Activated CD4-positive, alpha-beta memory T cell treated with anti-CD3 and anti-CD28 coated beads for 36 hours (primary cell): ENCODE measurements at regions of chr10 and their contacts with region 1.

Region 1: GRCh38 chr10:8053446-8054290 is 820 bp upstream of the GATA3 start:
- DNase-seq: peak; percentile 96
- H3K4me3 Mint-ChIP-seq: peak overlapping the region; percentile 99
- H3K27ac Mint-ChIP-seq: peak overlapping the region; percentile 99
- H3K4me1 Mint-ChIP-seq: peaks cover 29% of the 10 kb centered on the region
- H3K27me3 Mint-ChIP-seq: peaks cover 21% of the 10 kb centered on the region

Region 2: GRCh38 chr10:7797582-7797981 is 256.1 kb before region 1 on chr10:
- CTCF ChIA-PET with region 1: no interaction called
- POLR2A ChIA-PET with region 1: no interaction called
- intact Hi-C with region 1: no loop called
- DNase-seq: peak; percentile 18
- H3K4me3 Mint-ChIP-seq: no peak overlapping the region
- H3K27ac Mint-ChIP-seq: peak overlapping the region; percentile 28
- H3K4me1 Mint-ChIP-seq: peaks cover 40% of the 10 kb centered on the region
- H3K27me3 Mint-ChIP-seq: no peaks in the 10 kb centered on the region

Region 3: DNA sequence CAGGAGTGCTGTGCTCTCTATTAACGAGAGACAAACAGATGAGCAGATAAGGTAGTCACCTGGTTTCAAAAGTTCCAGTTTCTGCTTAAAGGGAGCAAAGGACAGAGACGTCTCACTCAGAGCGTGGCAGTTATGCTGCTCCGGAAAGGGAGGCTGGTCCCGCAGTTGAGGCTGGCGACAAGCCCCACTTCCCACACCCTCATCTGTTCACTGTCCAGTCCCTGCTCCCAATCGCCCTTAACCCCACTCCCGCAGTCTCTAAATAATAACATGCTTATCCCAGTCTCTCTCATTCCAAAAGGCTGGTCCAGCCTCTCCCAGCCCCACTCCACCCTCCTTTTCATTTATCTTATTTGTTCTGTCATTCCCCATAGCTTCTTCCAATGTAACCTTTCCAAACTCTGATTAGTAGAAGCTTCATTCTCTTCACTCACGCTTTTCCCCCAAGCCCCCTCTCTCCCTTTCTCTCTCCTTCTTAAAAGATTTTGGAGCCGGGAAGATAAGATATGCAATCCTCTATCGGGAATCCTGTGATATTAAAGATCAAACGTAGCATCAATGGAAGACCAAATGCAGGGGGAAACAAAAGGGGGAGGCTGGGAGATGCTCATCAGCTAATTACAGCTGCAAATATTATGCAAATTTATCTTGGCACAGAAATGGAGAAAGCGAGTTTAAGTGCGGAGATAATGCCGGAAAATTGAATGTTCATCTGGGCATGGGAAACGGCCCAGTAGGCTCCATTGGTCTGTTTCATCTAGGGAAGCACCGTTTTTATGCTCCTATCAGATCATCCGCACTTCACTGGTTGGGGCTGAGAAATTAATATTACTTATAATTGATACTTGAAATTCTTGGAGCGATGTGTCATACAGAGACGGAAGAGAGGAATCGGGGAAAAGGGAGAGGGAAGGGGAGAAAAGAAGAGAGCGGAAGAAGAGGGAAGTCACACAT is 15.4 kb before region 1 on chr10:
- CTCF ChIA-PET with region 1: interaction called, 5 read pairs
- POLR2A ChIA-PET with region 1: no interaction called
- intact Hi-C with region 1: loop called (anchors 2 kb)
- DNase-seq: peak; percentile 22
- H3K4me3 Mint-ChIP-seq: peak overlapping the region; percentile 18
- H3K27ac Mint-ChIP-seq: peak overlapping the region; percentile 9
- H3K4me1 Mint-ChIP-seq: peaks cover 49% of the 10 kb centered on the region
- H3K27me3 Mint-ChIP-seq: peaks cover 75% of the 10 kb centered on the region

Region 4: DNA sequence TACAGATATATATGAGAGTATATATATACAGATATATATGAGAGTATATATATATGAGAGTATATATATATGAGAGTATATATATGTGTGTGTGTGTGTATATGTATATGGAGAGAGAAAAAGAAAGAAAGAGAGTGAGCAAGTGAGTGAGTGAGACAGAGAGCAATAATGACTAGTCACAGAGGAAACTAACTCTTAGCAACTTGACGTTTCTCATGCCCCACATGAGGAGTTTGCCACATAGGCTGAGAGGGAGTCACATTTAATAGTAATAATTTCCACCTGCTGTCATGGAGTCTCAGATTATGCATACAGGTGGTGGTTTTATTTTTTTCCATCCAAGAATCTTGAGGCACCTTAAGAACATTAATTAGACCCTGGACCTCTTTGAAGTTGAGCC is 200.7 kb after region 1 on chr10:
- CTCF ChIA-PET with region 1: interaction called, 3 read pairs
- POLR2A ChIA-PET with region 1: no interaction called
- intact Hi-C with region 1: loop called (anchors 1 kb)
- DNase-seq: peak; percentile 54
- H3K4me3 Mint-ChIP-seq: peak overlapping the region; percentile 53
- H3K27ac Mint-ChIP-seq: peak overlapping the region; percentile 68
- H3K4me1 Mint-ChIP-seq: peaks cover 23% of the 10 kb centered on the region
- H3K27me3 Mint-ChIP-seq: no peaks in the 10 kb centered on the region

Region 5: DNA sequence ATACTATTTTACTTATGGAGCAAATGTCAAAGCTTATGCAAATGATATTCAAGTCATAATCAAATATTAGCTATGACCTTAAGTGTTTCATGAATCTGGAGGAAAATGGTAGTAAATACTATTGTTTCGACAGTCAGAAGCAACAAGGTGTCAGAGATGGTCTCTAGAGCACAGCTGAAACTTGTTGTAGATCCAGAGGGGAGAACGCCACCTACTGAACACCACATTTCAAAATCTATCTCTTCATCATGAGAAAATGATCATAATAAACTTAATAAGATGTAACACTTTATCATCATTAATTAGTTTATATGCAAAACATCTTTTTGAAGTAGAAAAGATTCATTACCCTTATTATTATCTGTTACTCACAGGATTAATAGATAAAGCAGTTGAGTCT is 419.5 kb after region 1 on chr10:
- CTCF ChIA-PET with region 1: no interaction called
- POLR2A ChIA-PET with region 1: no interaction called
- intact Hi-C with region 1: loop called (anchors 1 kb)
- DNase-seq: peak; percentile 13
- H3K4me3 Mint-ChIP-seq: no peak overlapping the region
- H3K27ac Mint-ChIP-seq: no peak overlapping the region
- H3K4me1 Mint-ChIP-seq: peaks cover 4% of the 10 kb centered on the region
- H3K27me3 Mint-ChIP-seq: peaks cover 13% of the 10 kb centered on the region

Region 6: GRCh38 chr10:8600192-8600591 is 546.5 kb after region 1 on chr10:
- CTCF ChIA-PET with region 1: no interaction called
- POLR2A ChIA-PET with region 1: no interaction called
- intact Hi-C with region 1: no loop called
- DNase-seq: peak; percentile 43
- H3K4me3 Mint-ChIP-seq: no peak overlapping the region
- H3K27ac Mint-ChIP-seq: no peak overlapping the region
- H3K4me1 Mint-ChIP-seq: peaks cover 5% of the 10 kb centered on the region
- H3K27me3 Mint-ChIP-seq: peaks cover 10% of the 10 kb centered on the region

Region 7: GRCh38 chr10:8898745-8899325 is 845.2 kb after region 1 on chr10:
- CTCF ChIA-PET with region 1: no interaction called
- POLR2A ChIA-PET with region 1: no interaction called
- intact Hi-C with region 1: loop called (anchors 10 kb)
- DNase-seq: no peak
- H3K4me3 Mint-ChIP-seq: peak overlapping the region; percentile 4
- H3K27ac Mint-ChIP-seq: peak overlapping the region; percentile 57
- H3K4me1 Mint-ChIP-seq: peaks cover 4% of the 10 kb centered on the region
- H3K27me3 Mint-ChIP-seq: peaks cover 9% of the 10 kb centered on the region

Region 8: DNA sequence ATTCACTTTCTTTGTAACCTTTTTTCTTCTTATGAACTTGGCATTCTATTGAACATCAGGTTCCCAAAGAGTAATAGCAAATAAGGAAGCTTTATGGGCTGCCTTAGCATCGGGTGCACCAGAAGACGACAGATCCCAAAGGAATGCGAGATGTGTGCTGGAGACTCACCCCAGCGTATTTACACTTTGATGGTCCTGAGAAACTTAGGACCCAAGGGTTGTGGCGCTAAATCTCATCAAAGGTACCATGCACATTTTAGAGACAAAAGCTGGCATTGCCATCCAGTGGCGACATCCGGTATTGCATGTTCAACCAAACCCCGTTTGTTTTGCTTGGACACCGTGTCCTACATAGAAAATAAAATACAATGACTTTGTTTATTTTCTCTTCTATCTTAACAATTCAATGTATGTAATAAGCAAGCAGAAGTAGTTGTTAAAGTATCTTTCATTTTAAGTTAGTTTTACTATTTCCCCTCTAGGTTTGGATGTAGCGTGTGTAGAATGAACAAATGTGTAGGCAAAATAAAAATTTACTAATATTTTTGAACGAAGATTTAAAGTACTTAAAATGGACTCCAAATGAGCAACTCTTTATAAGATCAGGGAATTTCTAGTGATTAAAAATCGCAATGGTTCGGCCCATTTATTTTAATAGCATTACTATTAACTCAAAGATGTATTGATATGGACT is 1155.6 kb after region 1 on chr10:
- CTCF ChIA-PET with region 1: no interaction called
- POLR2A ChIA-PET with region 1: no interaction called
- intact Hi-C with region 1: loop called (anchors 5 kb)
- DNase-seq: peak; percentile 83
- H3K4me3 Mint-ChIP-seq: no peak overlapping the region
- H3K27ac Mint-ChIP-seq: no peak overlapping the region
- H3K4me1 Mint-ChIP-seq: no peaks in the 10 kb centered on the region
- H3K27me3 Mint-ChIP-seq: peaks cover 9% of the 10 kb centered on the region